Dorsolateral prefrontal cortex (tissue), 120 donors: ENCODE measurements at regions of chr11 and their contacts with region 1.

Region 1: DNA sequence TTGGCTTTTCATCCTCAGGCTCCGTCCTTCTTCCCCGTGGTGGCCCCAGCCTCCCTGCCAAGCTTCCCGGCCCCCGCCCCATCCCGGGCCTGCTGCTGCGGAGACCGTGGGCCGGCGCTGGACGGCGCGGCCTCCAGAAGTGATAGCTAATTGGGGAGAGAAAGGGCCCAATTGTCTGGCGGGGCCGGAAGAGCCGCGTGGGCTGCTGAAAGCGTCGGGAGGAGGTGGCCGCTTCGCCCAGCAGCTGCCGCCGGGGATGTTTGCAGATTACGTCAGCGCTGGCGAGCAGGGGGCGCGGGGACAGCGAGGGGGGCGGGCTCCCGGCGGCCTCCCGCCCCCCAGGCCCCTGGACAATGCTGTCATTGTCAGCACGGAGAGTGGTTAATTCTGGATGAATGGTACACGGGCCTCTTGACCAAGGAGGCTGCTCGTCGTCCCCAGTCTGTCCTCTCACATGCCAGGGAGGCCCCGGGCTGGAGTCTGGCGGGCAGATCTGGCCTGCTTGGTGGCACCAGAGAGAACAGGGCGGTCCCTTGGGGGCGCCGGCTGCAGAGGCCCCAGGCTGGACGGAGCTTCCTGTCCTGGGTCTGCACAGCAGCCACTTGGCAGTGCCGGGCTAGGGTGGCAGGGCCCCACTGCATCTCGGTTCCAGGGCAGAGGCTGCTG is 1.6 kb downstream of the SMIM38 start:
- DNase-seq: peak; percentile 31 to 90 (median 86)
- H3K4me3 ChIP-seq: peak overlapping the region in 37 of 59 donors; percentile 1 to 46 (median 22)
- H3K27ac ChIP-seq: peak overlapping the region in 58 of 59 donors; percentile 7 to 92 (median 84)
- H3K27me3 ChIP-seq: no peaks in the 10 kb centered on the region
- CTCF ChIP-seq: peak in 24 of 56 donors; percentile 2 to 55 (median 18)

Region 2: DNA sequence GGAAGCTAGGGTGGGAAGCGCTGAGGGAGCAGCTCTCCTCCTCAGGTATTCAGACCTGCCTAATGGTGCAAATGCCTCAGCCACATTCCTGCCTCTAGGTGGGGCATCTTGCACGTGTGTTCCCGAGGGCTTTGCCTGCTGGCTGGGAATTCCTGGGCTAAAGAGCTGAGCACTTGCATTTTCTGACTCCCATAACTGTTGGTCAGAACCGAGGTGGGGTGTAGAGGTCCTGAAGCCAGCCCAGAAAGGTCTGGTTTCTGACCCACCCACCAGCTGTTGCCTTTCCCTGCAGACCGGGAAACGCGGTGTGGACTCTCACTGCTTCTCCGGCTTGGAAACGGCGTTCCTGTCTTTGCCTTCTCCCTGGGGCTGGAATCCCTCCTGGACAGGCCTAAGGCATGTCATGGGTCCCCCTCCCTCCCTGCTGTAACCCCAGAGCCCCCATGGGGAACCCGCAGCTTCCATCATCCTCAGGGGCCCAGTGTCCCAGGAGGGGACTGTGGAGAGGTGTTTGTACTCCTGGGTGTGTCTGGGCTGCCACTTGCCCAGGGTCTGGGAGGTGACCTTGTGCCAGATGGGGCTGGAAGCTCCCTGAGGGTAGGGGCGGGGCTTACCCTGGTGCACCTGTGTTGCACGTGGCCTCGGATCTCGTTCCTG is 25.5 kb before region 1 on chr11:
- intact Hi-C with region 1: loop called in 1 of 2 experiments (anchors 2 kb)
- DNase-seq: peak in 8 of 10 donors; percentile 23 to 70 (median 44)
- H3K4me3 ChIP-seq: no peak overlapping the region
- H3K27ac ChIP-seq: no peak overlapping the region
- H3K27me3 ChIP-seq: peaks cover 0 to 4% (median 0%) of the 10 kb centered on the region in 45 donors
- CTCF ChIP-seq: peak; percentile 45 to 86 (median 74)

Region 3: GRCh38 chr11:69443138-69443967 is 286.1 kb after region 1 on chr11:
- intact Hi-C with region 1: loop called in 1 of 2 experiments (anchors 10 kb)
- DNase-seq: peak; percentile 71 to 93 (median 88)
- H3K4me3 ChIP-seq: peak overlapping the region; percentile 40 to 74 (median 61)
- H3K27ac ChIP-seq: peak overlapping the region in 55 of 59 donors; percentile 1 to 90 (median 74)
- H3K27me3 ChIP-seq: no peaks in the 10 kb centered on the region
- CTCF ChIP-seq: peak in 15 of 56 donors; percentile 8 to 40 (median 20)

Region 4: GRCh38 chr11:69497221-69497787 is 340.0 kb after region 1 on chr11:
- intact Hi-C with region 1: loop called in 1 of 2 experiments (anchors 10 kb)
- DNase-seq: peak in 9 of 10 donors; percentile 27 to 77 (median 53)
- H3K4me3 ChIP-seq: peak overlapping the region in 1 of 59 donors; percentile 11
- H3K27ac ChIP-seq: peak overlapping the region in 28 of 59 donors; percentile 11 to 86 (median 51)
- H3K27me3 ChIP-seq: no peaks in the 10 kb centered on the region
- CTCF ChIP-seq: no peak